ENCODE measurements at regions of chr5 and their contacts with region 1.

Region 1: DNA sequence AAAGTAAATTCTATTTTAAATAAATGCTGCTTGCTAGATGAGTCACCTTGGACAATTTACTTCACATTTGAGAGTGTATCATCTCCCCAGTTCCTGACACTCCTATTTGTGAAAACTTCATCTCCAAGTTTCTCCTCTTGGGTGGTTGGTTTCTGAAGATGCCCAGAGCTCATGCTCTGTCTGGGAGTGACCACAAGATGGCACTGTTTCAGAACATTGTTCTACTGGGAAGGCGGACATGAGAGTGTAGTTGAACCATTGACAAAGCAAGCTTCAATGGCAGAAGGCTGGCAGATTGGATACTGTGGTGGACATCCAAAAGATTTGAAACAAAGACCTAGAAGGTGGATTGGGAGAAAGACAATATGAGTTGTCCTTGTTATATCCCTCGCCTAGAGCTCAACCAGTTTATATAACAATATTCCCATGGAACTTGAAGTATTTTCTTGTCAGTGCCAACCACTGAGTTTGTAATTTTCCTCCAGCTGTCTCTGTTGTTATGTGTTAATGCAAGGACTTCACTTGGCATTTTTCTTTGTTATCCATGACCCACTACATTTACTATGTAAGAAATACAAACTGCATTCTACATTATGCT is 234.3 kb upstream of the ANKH start:
- DNase-seq: peak; percentile 19 to 67
- H3K4me3 ChIP-seq: no peak overlapping the region
- H3K27ac ChIP-seq: no peak overlapping the region
- H3K4me1 ChIP-seq: no peaks in the 10 kb centered on the region
- H3K27me3 ChIP-seq: no peaks in the 10 kb centered on the region
- CTCF ChIP-seq: peak; percentile 42 to 90 (median 78)
- EP300 ChIP-seq: no peak
- POLR2A ChIP-seq: no peak
- RAD21 ChIP-seq: peak; percentile 78 to 88

Region 2: GRCh38 chr5:15034379-15034778 is 71.5 kb before region 1 on chr5:
- CTCF ChIA-PET with region 1: no interaction called
- POLR2A ChIA-PET with region 1: no interaction called
- DNase-seq: no peak
- H3K4me3 ChIP-seq: no peak overlapping the region
- H3K27ac ChIP-seq: no peak overlapping the region
- H3K4me1 ChIP-seq: no peaks in the 10 kb centered on the region
- H3K27me3 ChIP-seq: peaks cover 5 to 7% (median 6%) of the 10 kb centered on the region in 4 experiments
- CTCF ChIP-seq: no peak
- EP300 ChIP-seq: no peak
- POLR2A ChIP-seq: no peak
- RAD21 ChIP-seq: no peak

Region 3: GRCh38 chr5:15085671-15086070 is 20.2 kb before region 1 on chr5:
- CTCF ChIA-PET with region 1: no interaction called
- POLR2A ChIA-PET with region 1: no interaction called
- DNase-seq: no peak
- H3K4me3 ChIP-seq: no peak overlapping the region
- H3K27ac ChIP-seq: no peak overlapping the region
- H3K4me1 ChIP-seq: no peaks in the 10 kb centered on the region
- H3K27me3 ChIP-seq: no peaks in the 10 kb centered on the region
- CTCF ChIP-seq: no peak
- EP300 ChIP-seq: no peak
- POLR2A ChIP-seq: no peak
- RAD21 ChIP-seq: no peak

Region 4: DNA sequence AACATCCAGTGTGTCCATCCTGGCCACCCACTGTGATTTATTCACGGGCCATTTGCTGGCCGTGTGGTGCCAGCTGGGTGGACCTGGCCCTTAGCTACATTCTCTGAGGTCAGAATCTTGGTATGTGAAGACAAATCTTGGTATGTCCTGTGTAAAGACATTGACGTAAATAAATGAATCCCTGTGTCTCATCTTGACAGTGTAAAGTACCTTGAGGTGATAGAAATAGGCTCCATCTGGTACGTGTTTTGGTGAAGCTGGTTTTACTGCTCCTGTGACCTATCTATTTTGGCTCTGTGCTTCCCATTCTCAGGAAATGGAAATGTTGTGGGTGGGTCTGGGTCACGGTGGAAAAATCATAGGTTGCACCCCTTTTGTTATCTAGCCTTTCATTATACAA is 11.1 kb after region 1 on chr5:
- CTCF ChIA-PET with region 1: interaction called, 12 read pairs
- POLR2A ChIA-PET with region 1: no interaction called
- DNase-seq: no peak
- H3K4me3 ChIP-seq: no peak overlapping the region
- H3K27ac ChIP-seq: no peak overlapping the region
- H3K4me1 ChIP-seq: no peaks in the 10 kb centered on the region
- H3K27me3 ChIP-seq: no peaks in the 10 kb centered on the region
- CTCF ChIP-seq: no peak
- EP300 ChIP-seq: no peak
- POLR2A ChIP-seq: no peak
- RAD21 ChIP-seq: no peak

Region 5: DNA sequence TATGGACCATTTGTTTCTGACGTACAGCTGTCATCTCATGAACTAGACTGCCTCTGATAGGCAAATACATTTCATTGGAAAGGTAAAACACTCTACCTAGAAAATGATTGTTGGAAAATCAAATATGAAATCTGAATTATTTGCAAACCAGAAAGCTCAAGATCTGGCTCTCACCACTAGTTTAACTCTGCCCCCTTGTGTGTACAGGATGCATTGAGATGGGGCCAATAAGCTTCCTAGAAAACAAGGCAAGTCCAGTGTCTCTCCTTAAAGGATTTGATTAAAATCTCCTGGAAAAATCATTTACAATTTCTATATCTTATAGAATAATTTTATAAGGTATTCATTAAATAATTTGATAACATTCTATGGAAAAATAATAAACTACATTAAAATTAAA is 77.6 kb after region 1 on chr5:
- CTCF ChIA-PET with region 1: interaction called, 20 read pairs
- POLR2A ChIA-PET with region 1: no interaction called
- DNase-seq: no peak
- H3K4me3 ChIP-seq: no peak overlapping the region
- H3K27ac ChIP-seq: no peak overlapping the region
- H3K4me1 ChIP-seq: no peaks in the 10 kb centered on the region
- H3K27me3 ChIP-seq: no peaks in the 10 kb centered on the region
- CTCF ChIP-seq: peak in 2 of 3 experiments; percentile 52 to 55; a peak in 3 of 4 replicates
- EP300 ChIP-seq: no peak
- POLR2A ChIP-seq: no peak
- RAD21 ChIP-seq: peak; percentile 56 to 68